Mammary epithelial cell (primary cell): ENCODE measurements at regions of chr2 and their contacts with region 1.

Region 1: GRCh38 chr2:88187038-88187676 is 17.0 kb downstream of the THNSL2 start:
- DNase-seq: peak; percentile 72
- H3K4me3 ChIP-seq: no peak overlapping the region
- H3K27ac ChIP-seq: no peak overlapping the region
- H3K4me1 ChIP-seq: peaks cover 4% of the 10 kb centered on the region
- H3K27me3 ChIP-seq: no peaks in the 10 kb centered on the region
- CTCF ChIP-seq: peak; percentile 78 to 96

Region 2: DNA sequence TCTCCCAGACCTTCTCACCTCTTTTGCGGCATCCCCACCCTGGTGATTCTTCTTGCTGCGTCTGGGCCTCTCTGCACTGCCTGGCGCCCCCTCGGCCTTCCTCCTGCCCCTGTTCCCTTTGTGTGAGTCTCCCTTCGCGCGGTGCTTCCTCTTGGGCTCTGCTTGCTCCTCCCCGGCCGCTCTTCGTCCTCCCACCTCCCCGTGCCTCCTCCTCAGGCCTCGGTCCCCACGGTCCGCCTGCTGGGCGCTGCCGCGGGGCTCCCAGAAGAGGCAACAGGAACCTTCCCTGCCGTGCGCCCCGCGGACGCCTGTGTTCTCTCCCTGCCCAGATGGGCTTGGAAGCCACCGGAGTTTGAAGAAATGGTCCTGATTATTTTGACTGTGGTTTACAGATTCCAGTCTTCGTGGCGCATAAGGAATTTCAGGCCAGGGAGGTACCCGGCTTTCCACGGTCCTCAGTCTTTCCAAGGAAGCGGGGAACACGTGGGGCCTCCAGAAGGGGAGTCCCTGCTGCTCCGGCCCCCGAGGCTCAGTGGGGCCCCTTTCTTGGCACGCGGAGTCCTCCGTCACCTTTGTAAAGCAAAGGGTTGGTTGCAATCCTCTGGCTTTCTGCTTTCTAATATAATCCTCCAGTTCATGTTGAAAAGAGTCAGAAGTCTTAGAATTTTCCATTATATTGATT is 183.9 kb before region 1 on chr2:
- CTCF ChIA-PET with region 1: no interaction called
- dilution Hi-C with region 1: no loop called
- in situ Hi-C with region 1: no loop called
- intact Hi-C with region 1: loop called (anchors 5 kb)
- DNase-seq: no peak
- H3K4me3 ChIP-seq: no peak overlapping the region
- H3K27ac ChIP-seq: no peak overlapping the region
- H3K4me1 ChIP-seq: no peaks in the 10 kb centered on the region
- H3K27me3 ChIP-seq: peaks cover 1% of the 10 kb centered on the region
- CTCF ChIP-seq: no peak

Region 3: GRCh38 chr2:88159955-88160415 is 27.2 kb before region 1 on chr2:
- CTCF ChIA-PET with region 1: no interaction called
- dilution Hi-C with region 1: no loop called
- in situ Hi-C with region 1: no loop called
- intact Hi-C with region 1: loop called (anchors 1 kb)
- DNase-seq: peak; percentile 49
- H3K4me3 ChIP-seq: no peak overlapping the region
- H3K27ac ChIP-seq: no peak overlapping the region
- H3K4me1 ChIP-seq: peaks cover 9% of the 10 kb centered on the region
- H3K27me3 ChIP-seq: no peaks in the 10 kb centered on the region
- CTCF ChIP-seq: peak; percentile 88 to 89

Region 4: DNA sequence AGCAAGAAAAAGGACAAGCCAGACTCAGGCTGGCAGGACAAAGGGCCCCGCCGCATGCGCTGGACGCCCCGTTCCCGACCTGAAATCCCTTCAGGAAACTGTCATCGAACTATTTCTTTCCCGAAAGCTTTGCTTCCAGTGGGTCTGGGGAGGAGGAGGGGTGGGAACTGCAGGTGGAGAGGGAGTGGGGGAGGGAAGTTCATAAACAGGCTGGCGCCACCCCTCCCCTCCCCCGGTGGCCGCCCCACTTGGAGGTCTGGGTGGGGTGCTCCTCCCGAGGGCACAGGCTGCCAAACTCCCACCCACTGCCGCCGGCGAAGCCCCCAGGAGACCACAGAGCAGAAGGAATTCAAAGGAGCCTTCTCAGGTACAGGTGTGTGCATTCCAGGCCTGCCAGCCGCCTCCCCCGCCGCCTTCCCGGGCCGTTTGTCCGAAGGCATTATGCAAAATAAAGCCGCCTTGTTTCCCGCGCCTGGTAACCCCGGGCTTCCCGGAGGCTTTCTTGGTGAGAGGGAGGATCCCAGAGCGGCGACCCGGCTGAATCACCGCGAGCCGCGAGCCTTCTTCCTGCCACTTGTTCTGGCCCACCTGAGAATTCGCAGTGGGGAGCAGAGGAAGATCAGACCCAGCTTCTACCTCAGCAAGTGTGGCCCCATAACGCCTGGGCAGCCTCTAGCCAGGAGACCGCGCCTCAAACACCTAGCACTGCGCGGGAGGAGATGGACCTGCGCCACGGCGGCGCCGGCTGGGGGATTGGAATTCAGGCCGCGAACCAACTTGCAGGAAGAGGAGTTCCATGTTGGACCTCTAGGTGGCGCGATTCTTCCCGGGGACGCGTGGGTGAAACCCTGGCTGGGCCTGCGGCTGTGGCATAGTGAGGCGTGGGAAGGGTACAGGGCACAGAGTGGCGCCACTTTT is 163.4 kb after region 1 on chr2:
- CTCF ChIA-PET with region 1: no interaction called
- dilution Hi-C with region 1: no loop called
- in situ Hi-C with region 1: no loop called
- intact Hi-C with region 1: loop called (anchors 1 kb)
- DNase-seq: peak; percentile 47
- H3K4me3 ChIP-seq: peak overlapping the region; percentile 25 to 48 (median 39)
- H3K27ac ChIP-seq: no peak overlapping the region
- H3K4me1 ChIP-seq: peaks cover 9% of the 10 kb centered on the region
- H3K27me3 ChIP-seq: no peaks in the 10 kb centered on the region
- CTCF ChIP-seq: peak; percentile 78 to 90

Region 5: GRCh38 chr2:88469202-88470114 is 282.3 kb after region 1 on chr2:
- CTCF ChIA-PET with region 1: no interaction called
- dilution Hi-C with region 1: no loop called
- in situ Hi-C with region 1: loop called (anchors 10 to 25 kb)
- intact Hi-C with region 1: no loop called
- DNase-seq: no peak
- H3K4me3 ChIP-seq: no peak overlapping the region
- H3K27ac ChIP-seq: no peak overlapping the region
- H3K4me1 ChIP-seq: no peaks in the 10 kb centered on the region
- H3K27me3 ChIP-seq: no peaks in the 10 kb centered on the region
- CTCF ChIP-seq: no peak

Region 6: GRCh38 chr2:88669371-88670214 is 482.4 kb after region 1 on chr2:
- CTCF ChIA-PET with region 1: interaction called, 5 read pairs
- dilution Hi-C with region 1: no loop called
- in situ Hi-C with region 1: loop called (anchors 25 kb)
- intact Hi-C with region 1: loop called (anchors 1 kb)
- DNase-seq: peak; percentile 60
- H3K4me3 ChIP-seq: no peak overlapping the region
- H3K27ac ChIP-seq: no peak overlapping the region
- H3K4me1 ChIP-seq: peaks cover 5% of the 10 kb centered on the region
- H3K27me3 ChIP-seq: no peaks in the 10 kb centered on the region
- CTCF ChIP-seq: peak; percentile 80 to 91